H1 (cell line): ENCODE measurements at regions of chr10 and their contacts with region 1.

Region 1: GRCh38 chr10:28387141-28387540 is 84.3 kb upstream of the MPP7 start:
- DNase-seq: no peak
- H3K4me3 ChIP-seq: no peak overlapping the region
- H3K27ac ChIP-seq: no peak overlapping the region
- H3K4me1 ChIP-seq: no peaks in the 10 kb centered on the region
- H3K27me3 ChIP-seq: no peaks in the 10 kb centered on the region
- CTCF ChIP-seq: no peak
- EP300 ChIP-seq: no peak
- POLR2A ChIP-seq: no peak
- RAD21 ChIP-seq: no peak

Region 2: DNA sequence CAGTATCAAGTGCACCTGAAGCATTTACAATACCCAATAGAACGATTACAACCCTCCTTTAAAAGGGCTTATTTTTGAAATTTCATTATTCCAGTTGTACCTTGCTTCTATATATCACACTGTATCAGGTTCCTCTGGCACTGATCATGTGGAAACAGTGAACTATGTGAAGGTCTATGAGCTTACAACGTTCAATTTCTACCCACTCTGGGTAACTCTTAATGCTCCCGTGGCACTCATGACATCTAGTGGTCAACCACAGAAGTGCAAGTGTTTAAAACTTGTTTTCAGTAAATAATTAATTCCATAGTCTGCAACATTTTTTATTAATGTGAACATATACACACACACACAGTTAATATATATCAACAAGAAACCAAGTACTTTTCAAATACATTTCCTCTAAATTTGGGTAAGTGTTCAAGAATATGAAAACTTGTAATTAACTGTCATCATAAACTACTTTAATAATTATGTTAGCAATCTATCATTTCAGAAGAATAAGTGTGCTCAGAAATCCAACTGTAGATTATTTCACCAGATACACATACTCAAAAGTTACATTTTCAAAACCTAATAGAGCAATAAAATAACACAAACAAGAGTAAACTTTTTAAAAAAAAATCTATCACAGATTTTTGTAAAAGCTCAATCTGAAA is 145.3 kb before region 1 on chr10:
- CTCF ChIA-PET with region 1: interaction called, 88 read pairs
- POLR2A ChIA-PET with region 1: no interaction called
- DNase-seq: no peak
- H3K4me3 ChIP-seq: no peak overlapping the region
- H3K27ac ChIP-seq: no peak overlapping the region
- H3K4me1 ChIP-seq: no peaks in the 10 kb centered on the region
- H3K27me3 ChIP-seq: no peaks in the 10 kb centered on the region
- CTCF ChIP-seq: peak in 2 of 3 experiments; percentile 66 to 79; a peak in 3 of 4 replicates
- EP300 ChIP-seq: no peak
- POLR2A ChIP-seq: no peak
- RAD21 ChIP-seq: peak; percentile 92 to 93

Region 3: GRCh38 chr10:28410420-28411135 is 23.4 kb after region 1 on chr10:
- CTCF ChIA-PET with region 1: no interaction called
- POLR2A ChIA-PET with region 1: no interaction called
- DNase-seq: no peak
- H3K4me3 ChIP-seq: no peak overlapping the region
- H3K27ac ChIP-seq: no peak overlapping the region
- H3K4me1 ChIP-seq: no peaks in the 10 kb centered on the region
- H3K27me3 ChIP-seq: no peaks in the 10 kb centered on the region
- CTCF ChIP-seq: peak in 2 of 3 experiments; percentile 34 to 43; a peak in 3 of 4 replicates
- EP300 ChIP-seq: no peak
- POLR2A ChIP-seq: no peak
- RAD21 ChIP-seq: peak; percentile 23 to 49; a peak in 3 of 4 replicates